Psoas muscle (tissue), 8 donors: ENCODE measurements at regions of chr15 and their contacts with region 1.

Region 1: DNA sequence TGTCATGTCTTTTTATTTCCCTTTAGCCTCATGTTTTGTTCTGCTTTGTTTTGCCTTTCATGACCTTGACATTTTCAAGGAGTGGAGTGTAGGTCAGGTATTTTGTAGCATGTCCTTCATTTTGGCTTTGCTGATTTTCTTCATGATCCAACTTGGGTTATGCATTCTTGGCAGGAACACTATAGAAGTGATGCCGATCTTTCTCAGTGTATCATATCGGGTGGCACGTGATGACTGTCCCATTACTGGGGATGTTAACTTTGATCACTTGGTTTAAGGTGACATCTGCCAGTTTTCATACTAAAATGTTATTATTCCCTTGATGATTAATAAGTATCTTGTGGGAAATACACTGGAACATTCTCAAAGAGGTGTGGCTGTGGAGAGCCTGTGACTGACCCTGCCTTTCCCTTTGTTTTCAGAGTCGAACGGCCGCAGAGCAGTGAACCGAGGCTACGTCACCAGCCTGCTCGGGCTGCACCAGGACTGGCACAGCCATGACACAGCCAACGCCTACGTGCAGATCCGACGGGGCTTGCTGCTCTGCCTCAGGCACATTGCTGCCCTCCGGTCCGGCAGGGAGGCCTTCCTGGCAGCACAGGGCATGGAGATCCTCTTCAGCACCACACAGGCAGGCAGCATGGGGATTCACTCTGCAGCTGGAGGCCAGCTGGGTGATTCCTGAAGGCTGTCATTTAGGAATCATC is 167.7 kb downstream of the AGBL1 start:
- DNase-seq: peak in 1 of 2 donors; percentile 33
- ATAC-seq: peak; percentile 71 to 82 (median 76)
- H3K4me3 ChIP-seq: peak overlapping the region; percentile 13
- H3K27ac ChIP-seq: peak overlapping the region; percentile 54
- H3K4me1 ChIP-seq: no peaks in the 10 kb centered on the region
- H3K27me3 ChIP-seq: no peaks in the 10 kb centered on the region
- CTCF ChIP-seq: no peak

Region 2: GRCh38 chr15:85865070-85865684 is 382.2 kb before region 1 on chr15:
- intact Hi-C with region 1: loop called in 1 of 2 experiments (anchors 10 kb)
- DNase-seq: peak in 1 of 2 donors; percentile 25
- ATAC-seq: peak; percentile 56 to 90 (median 76)
- H3K4me3 ChIP-seq: no peak overlapping the region
- H3K27ac ChIP-seq: no peak overlapping the region
- H3K4me1 ChIP-seq: no peaks in the 10 kb centered on the region
- H3K27me3 ChIP-seq: no peaks in the 10 kb centered on the region
- CTCF ChIP-seq: peak; percentile 66

Region 3: DNA sequence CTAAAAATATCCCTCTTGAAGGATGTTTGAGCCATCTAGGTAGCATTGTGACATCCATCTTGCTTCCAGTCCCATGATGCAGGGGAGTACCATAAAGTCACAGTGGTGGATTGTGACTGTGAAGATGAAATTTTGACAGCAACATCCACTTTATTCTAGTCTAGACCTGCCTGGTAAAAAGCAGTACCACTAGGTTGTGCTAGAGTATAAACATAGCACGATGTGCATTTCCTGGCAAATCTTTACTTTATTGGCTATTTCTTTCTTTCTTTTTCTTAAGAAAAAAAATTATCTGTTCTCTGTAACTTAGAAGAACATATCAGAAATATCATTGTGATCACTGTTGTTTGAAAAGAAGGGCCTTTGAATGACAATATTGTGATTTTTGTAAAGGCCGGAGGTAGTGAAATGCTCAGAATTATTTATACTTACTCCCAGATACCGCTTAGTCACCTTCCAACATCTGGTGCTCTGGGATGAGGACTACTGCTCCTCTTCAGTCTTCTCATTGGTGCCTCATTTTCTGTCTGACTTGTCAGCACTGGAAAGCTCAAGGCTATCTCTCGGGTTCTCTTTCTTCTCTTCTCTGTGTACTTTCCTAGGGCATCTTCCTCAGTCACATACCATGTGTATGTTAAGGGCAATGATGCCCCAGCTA is 132.1 kb before region 1 on chr15:
- intact Hi-C with region 1: loop called in 1 of 2 experiments (anchors 10 kb)
- DNase-seq: no peak
- ATAC-seq: peak; percentile 57 to 80 (median 72)
- H3K4me3 ChIP-seq: no peak overlapping the region
- H3K27ac ChIP-seq: no peak overlapping the region
- H3K4me1 ChIP-seq: peaks cover 15% of the 10 kb centered on the region
- H3K27me3 ChIP-seq: no peaks in the 10 kb centered on the region
- CTCF ChIP-seq: peak; percentile 55

Region 4: GRCh38 chr15:86706813-86707212 is 459.4 kb after region 1 on chr15:
- intact Hi-C with region 1: no loop called
- DNase-seq: no peak
- ATAC-seq: no peak
- H3K4me3 ChIP-seq: no peak overlapping the region
- H3K27ac ChIP-seq: no peak overlapping the region
- H3K4me1 ChIP-seq: peaks cover 2% of the 10 kb centered on the region
- H3K27me3 ChIP-seq: no peaks in the 10 kb centered on the region
- CTCF ChIP-seq: no peak